A549 (cell line): ENCODE measurements at regions of chr11 and their contacts with region 1.

Region 1: DNA sequence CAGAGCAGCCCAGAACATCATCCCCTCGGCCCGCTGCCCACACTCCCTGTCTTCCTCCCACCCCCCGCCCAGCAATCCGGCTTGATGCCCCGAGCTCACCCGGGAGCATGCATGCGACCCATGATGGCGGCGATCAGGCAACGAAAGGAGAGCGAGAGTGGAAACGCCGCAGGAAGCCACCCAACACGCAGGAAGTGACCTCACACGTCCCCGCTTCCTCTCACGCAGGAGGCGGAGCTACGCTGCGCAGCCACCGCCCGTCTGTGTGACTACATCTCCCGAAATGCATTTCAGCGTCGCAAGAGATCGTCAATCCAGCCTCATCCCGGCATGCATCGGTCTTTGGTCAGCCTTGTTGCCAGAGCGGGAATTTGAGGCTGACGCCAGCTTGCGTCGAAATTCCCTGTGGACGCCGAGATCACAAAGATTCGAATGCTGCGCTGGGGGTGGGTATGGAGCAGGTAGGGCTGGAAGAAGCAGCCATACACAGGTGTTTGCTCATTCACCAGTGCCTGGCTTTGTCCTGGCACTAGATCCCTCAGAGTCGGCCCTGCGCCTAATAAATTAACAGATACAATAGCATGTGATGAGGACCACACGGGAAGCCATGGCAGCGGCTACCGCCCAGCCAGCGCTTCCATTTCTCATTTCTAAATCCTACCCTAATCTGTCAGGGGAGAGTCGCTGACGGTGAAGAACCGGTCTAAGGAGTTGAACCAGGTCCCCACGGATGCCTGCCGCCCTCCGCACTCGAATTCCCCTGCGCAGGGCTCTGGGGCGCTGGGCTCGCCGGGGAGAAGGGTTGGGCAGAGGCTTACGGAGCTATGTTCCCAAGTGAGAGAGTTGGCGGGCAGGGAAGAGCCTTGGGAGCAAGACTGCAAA is at the start of gene RPS13:
- DNase-seq: peak; percentile 98 to 99
- ATAC-seq: peak; percentile 94 to 96
- H3K4me3 ChIP-seq: peak within 1 kb of the TSS; percentile 95
- H3K27ac ChIP-seq: peak within 1 kb of the TSS; percentile 96 to 99
- H3K4me1 ChIP-seq: peaks cover 26% of the 10 kb centered on the region
- CTCF ChIP-seq: no peak
- EP300 ChIP-seq: no peak
- POLR2A ChIP-seq: peak; percentile 94
- RAD21 ChIP-seq: no peak
- polyA plus RNA-seq, gene RPS13: 943 and 1,343 TPM in 2 replicates

Region 2: GRCh38 chr11:17207317-17208258 is 129.8 kb after region 1 on chr11 and contains the start of gene PIK3C2A:
- CTCF ChIA-PET with region 1: no interaction called
- POLR2A ChIA-PET with region 1: interaction called, 16 read pairs
- DNase-seq: peak; percentile 95
- ATAC-seq: peak; percentile 95 to 96
- H3K4me3 ChIP-seq: peak within 1 kb of the TSS; percentile 96
- H3K27ac ChIP-seq: peak within 1 kb of the TSS; percentile 88 to 95
- H3K4me1 ChIP-seq: peaks cover 23% of the 10 kb centered on the region
- CTCF ChIP-seq: no peak
- EP300 ChIP-seq: no peak
- POLR2A ChIP-seq: peak; percentile 94
- RAD21 ChIP-seq: no peak
- polyA plus RNA-seq, gene PIK3C2A: 35.9 and 51.0 TPM in 2 replicates